WTC11 (cell line): ENCODE measurements at regions of chrX and their contacts with region 1.

Region 1: GRCh38 chrX:104922206-104922621 is 298.3 kb downstream of the TEX13A start:
- DNase-seq: peak; percentile 74
- ATAC-seq: peak; percentile 98
- H3K4me3 Mint-ChIP-seq: no peak overlapping the region
- H3K27ac Mint-ChIP-seq: no peak overlapping the region
- H3K4me1 Mint-ChIP-seq: peaks cover 2% of the 10 kb centered on the region; the same call in 1 of the 2 replicates
- H3K27me3 Mint-ChIP-seq: no peaks in the 10 kb centered on the region
- CTCF ChIP-seq: peak; percentile 85

Region 2: GRCh38 chrX:104565791-104566680 is 356.2 kb before region 1 on chrX and contains the start of gene IL1RAPL2:
- CTCF ChIA-PET with region 1: interaction called, 29 read pairs
- POLR2A ChIA-PET with region 1: no interaction called
- DNase-seq: peak; percentile 79
- ATAC-seq: peak; percentile 77
- H3K4me3 Mint-ChIP-seq: peak within 1 kb of the TSS; percentile 79
- H3K27ac Mint-ChIP-seq: no peak within 1 kb of the TSS
- H3K4me1 Mint-ChIP-seq: peaks cover 5% of the 10 kb centered on the region; the same call in 1 of the 2 replicates
- H3K27me3 Mint-ChIP-seq: peaks cover 76% of the 10 kb centered on the region
- CTCF ChIP-seq: no peak
- total RNA-seq, gene IL1RAPL2: 0.07 to 0.18 TPM (median 0.09 TPM) in 3 replicates

Region 3: GRCh38 chrX:104668550-104668949 is 253.7 kb before region 1 on chrX:
- CTCF ChIA-PET with region 1: interaction called, 16 read pairs
- POLR2A ChIA-PET with region 1: no interaction called
- DNase-seq: no peak
- ATAC-seq: no peak
- H3K4me3 Mint-ChIP-seq: no peak overlapping the region
- H3K27ac Mint-ChIP-seq: no peak overlapping the region
- H3K4me1 Mint-ChIP-seq: no peaks in the 10 kb centered on the region
- H3K27me3 Mint-ChIP-seq: no peaks in the 10 kb centered on the region
- CTCF ChIP-seq: no peak